Activated CD4-positive, alpha-beta memory T cell treated with anti-CD3 and anti-CD28 coated beads, Interleukin-2, amount 10 ng/mL, durations not matched to agents 7 days and 5 days (primary cell): ENCODE measurements at regions of chr17 and their contacts with region 1.

Region 1: GRCh38 chr17:58631523-58632323 is 60.1 kb downstream of the TEX14 start:
- DNase-seq: peak; percentile 97
- H3K4me3 Mint-ChIP-seq: no peak overlapping the region
- H3K27ac Mint-ChIP-seq: no peak overlapping the region
- H3K4me1 Mint-ChIP-seq: peaks cover 3% of the 10 kb centered on the region
- H3K27me3 Mint-ChIP-seq: peaks cover 2% of the 10 kb centered on the region

Region 2: DNA sequence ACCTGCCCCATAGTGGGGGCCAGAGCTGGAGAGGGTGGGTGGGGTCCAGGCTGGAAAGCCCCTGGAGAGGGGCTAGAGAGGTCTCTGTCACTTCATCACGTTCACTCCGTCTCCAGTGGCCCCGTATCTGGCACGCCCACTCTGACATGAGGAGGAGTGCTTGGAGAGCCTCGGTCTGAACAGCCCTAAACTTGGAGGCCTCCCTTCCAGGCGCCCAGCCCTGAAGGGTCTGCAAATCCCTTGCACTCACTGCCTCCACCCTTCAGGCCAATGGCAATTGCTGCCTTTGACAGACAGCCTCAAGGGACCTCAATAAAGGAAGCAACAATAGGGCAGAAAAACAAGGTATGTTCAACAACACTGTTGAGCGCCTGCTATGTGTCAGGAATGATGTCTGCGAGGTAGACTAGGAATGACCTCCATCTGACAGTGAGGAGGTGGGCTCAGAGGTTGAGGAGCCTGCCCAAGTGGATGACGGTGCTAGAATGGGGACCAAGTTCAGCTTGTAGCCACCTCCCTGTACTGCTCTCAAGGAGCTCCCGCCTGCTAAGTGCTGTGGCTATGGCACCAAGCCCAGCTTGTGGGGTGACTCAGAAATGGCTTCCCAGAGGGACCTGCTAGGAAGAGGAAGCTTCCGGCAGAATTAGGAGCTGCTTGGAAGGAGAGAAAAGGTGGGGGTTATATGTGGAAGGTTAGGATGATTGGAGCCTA is 442.1 kb before region 1 on chr17:
- CTCF ChIA-PET with region 1: no interaction called
- POLR2A ChIA-PET with region 1: no interaction called
- DNase-seq: no peak
- H3K4me3 Mint-ChIP-seq: no peak overlapping the region
- H3K27ac Mint-ChIP-seq: no peak overlapping the region
- H3K4me1 Mint-ChIP-seq: peaks cover 3% of the 10 kb centered on the region
- H3K27me3 Mint-ChIP-seq: peaks cover 10% of the 10 kb centered on the region

Region 3: DNA sequence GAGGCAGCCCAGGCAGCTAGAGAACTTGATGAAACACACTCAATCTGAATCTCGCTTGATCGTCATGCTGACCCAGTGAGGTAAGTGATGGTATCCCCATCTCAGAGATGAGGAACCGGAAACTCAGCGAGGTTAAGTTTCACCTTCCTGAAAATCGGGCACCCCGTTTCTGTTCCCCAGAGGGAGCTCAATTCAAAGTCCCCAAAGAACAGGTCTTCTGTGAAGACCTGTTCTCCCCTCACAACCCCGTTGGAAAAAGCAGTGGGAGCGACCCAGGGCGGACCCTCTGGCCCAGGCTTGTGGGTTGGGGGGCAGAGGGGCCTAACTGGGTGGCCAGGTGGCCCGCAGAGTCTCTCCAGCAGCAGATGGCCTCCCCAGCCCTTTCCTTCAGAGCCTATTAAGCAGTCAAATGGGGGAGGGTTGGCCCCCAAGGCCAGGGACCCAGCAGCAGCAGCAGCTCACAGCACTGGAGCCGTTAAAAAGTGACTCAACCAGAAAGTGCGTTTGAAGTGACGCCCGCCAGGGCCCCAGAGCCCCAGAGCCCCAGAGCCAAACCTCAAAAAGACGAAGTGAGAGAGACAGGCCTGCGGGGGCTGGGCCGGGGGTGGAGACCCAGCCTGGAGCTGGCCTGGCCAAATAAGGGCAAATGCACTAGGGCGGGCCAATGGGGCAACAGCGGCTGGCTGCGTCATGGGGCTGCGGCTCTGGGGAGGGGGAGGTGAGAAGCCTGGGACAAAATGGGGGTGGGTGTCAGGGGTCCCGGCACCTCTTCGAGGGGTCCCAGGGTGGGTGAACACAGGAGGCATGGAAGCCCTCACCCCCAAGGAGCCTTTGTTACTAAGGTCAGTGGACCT is 293.9 kb before region 1 on chr17:
- CTCF ChIA-PET with region 1: no interaction called
- POLR2A ChIA-PET with region 1: interaction called, 33 read pairs
- DNase-seq: peak; percentile 96
- H3K4me3 Mint-ChIP-seq: peak overlapping the region; percentile 98
- H3K27ac Mint-ChIP-seq: peak overlapping the region; percentile 100
- H3K4me1 Mint-ChIP-seq: peaks cover 52% of the 10 kb centered on the region
- H3K27me3 Mint-ChIP-seq: no peaks in the 10 kb centered on the region

Region 4: DNA sequence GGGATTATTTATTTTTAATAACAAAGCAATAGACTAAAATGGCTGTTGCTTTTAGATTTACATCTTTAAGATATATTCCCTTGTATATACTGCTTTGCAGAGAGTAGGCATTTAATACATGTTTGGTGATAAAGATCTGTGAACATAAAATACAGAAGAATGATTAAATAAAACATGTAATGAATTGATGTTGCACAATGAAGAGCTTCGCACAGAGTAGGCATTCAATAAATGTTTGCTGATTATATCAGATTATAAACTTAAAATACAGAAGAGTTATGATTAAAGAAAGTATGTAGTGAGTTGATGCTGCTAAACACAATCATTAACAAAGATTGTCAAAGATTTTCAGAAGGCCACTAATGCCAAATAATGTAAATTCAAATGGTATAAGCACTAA is 167.9 kb before region 1 on chr17:
- CTCF ChIA-PET with region 1: no interaction called
- POLR2A ChIA-PET with region 1: no interaction called
- DNase-seq: no peak
- H3K4me3 Mint-ChIP-seq: no peak overlapping the region
- H3K27ac Mint-ChIP-seq: no peak overlapping the region
- H3K4me1 Mint-ChIP-seq: no peaks in the 10 kb centered on the region
- H3K27me3 Mint-ChIP-seq: no peaks in the 10 kb centered on the region

Region 5: GRCh38 chr17:58494825-58495535 is 136.7 kb before region 1 on chr17:
- CTCF ChIA-PET with region 1: no interaction called
- POLR2A ChIA-PET with region 1: no interaction called
- DNase-seq: no peak
- H3K4me3 Mint-ChIP-seq: no peak overlapping the region
- H3K27ac Mint-ChIP-seq: no peak overlapping the region
- H3K4me1 Mint-ChIP-seq: peaks cover 20% of the 10 kb centered on the region
- H3K27me3 Mint-ChIP-seq: no peaks in the 10 kb centered on the region

Region 6: GRCh38 chr17:58517734-58518609 is 113.8 kb before region 1 on chr17:
- CTCF ChIA-PET with region 1: interaction called, 20 read pairs
- POLR2A ChIA-PET with region 1: interaction called, 154 read pairs
- DNase-seq: peak; percentile 100
- H3K4me3 Mint-ChIP-seq: peak overlapping the region; percentile 90
- H3K27ac Mint-ChIP-seq: peak overlapping the region; percentile 97
- H3K4me1 Mint-ChIP-seq: peaks cover 50% of the 10 kb centered on the region
- H3K27me3 Mint-ChIP-seq: no peaks in the 10 kb centered on the region

Region 7: GRCh38 chr17:58605470-58605869 is 26.3 kb before region 1 on chr17:
- CTCF ChIA-PET with region 1: interaction called, 3 read pairs
- POLR2A ChIA-PET with region 1: interaction called, 213 read pairs
- DNase-seq: no peak
- H3K4me3 Mint-ChIP-seq: no peak overlapping the region
- H3K27ac Mint-ChIP-seq: no peak overlapping the region
- H3K4me1 Mint-ChIP-seq: peaks cover 10% of the 10 kb centered on the region
- H3K27me3 Mint-ChIP-seq: no peaks in the 10 kb centered on the region

Region 8: DNA sequence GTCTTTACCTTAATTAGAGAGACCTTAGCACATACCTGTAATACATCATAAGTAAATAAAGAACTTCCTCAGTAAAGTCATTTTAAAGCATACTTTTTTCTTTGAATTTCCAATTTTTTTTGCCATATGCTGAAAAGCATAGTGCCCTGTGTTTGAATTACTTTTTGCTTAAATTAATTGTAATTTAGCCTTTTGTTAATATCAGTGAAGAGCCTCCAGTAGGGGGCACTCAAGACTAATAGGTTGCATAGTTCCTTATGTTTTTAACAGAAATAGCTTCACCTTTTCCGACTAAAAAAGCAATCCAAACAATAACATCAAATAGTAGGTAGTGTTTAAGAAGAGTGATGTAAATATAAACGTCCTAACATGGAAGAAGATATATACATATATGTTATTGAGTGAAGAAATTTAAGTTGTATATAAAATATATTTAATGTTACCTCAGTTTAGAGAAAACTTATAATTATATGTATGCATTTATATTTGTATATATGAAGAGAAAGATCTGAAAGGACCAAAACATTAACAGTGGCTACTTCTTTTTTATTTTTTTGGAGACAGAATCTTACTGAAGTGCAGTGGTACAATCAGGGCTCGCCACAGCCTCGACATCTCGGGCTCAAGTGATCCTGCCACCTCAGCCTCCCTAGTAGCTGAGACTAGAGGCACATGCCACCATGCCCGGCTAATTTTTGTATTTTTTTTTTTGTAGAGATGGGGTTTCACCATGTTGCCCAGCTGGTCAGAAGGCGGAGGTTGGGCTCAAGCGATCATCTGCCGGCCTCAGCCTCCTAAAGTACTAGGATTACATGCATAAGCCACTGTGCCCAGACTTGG is 79.4 kb after region 1 on chr17:
- CTCF ChIA-PET with region 1: no interaction called
- POLR2A ChIA-PET with region 1: interaction called, 25 read pairs
- DNase-seq: peak; percentile 23
- H3K4me3 Mint-ChIP-seq: no peak overlapping the region
- H3K27ac Mint-ChIP-seq: no peak overlapping the region
- H3K4me1 Mint-ChIP-seq: peaks cover 15% of the 10 kb centered on the region
- H3K27me3 Mint-ChIP-seq: no peaks in the 10 kb centered on the region

Region 9: DNA sequence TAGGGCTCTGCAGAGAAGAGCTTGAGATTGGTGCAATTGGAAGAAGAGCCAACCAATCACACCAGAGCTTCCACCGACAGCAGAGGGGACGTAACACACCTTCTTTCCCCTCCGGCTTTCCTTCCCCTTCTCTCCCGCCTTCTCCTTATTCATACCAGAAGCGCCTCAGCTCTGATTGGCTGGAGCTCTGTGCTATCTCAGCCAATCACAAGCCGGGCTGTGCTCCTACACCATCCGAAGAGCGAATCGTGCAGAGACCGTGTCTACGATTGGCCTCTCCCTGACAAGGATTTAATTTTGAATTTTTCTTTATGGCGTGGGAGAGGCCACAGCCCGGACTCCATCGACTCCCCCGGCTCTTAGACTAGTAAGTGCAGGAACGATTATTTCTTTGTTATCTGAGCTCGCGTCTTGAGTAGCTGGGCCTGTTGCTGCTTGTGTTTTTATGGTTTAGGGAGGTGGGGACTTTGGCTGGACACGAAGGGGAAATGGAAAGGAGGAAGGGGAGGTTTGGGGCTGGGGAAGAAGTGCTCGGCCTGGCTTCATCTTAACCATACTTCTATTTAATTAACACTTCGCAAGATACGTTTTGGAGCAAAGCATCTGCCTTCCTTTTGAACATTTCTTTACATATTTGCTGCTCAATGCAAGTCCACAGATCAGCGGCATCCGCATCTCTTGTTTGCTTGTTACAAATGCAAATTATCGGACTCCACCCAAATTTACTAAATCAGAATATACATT is 523.9 kb after region 1 on chr17 and contains the start of gene PRR11:
- CTCF ChIA-PET with region 1: no interaction called
- POLR2A ChIA-PET with region 1: interaction called, 36 read pairs
- DNase-seq: peak; percentile 96
- H3K4me3 Mint-ChIP-seq: no peak within 1 kb of the TSS
- H3K27ac Mint-ChIP-seq: no peak within 1 kb of the TSS
- H3K4me1 Mint-ChIP-seq: peaks cover 63% of the 10 kb centered on the region
- H3K27me3 Mint-ChIP-seq: no peaks in the 10 kb centered on the region
- total RNA-seq, gene PRR11: 68.2 to 70.6 TPM